ENCODE measurements at regions of chr1 and their contacts with region 1.

Region 1: DNA sequence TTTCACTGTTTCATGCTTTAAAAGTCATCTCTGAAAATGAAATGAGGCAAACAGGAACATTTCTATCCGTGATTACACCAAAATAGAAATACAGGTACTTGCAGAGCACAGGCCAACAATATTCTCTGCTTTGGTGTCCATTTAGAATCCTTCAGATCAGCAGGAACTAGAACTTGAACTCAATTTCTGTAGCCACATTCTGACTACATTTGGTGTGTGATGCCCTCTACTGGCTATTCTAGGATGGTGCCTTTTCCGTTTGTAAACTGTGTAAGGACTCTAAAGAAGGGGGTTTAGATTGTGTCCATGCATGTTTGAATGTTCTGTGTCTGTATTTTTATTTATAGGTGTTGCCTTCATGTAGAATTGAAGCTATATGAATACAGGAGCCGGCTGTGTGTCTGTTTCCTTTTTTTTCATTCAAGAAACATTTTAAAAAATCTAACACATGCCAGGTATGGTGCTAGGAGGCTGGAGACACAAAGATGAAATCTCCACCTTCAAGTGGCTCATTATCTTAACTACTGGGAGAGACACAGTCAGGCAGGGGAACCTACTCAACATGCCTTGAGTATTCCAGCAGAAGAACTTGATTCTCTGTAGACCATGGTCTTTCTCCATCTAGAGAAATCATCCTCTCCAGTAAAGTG is 7.6 kb upstream of the ZNF326 start:
- DNase-seq: peak; percentile 80
- ATAC-seq: peak; percentile 93
- H3K4me3 ChIP-seq: no peak overlapping the region
- H3K27ac ChIP-seq: no peak overlapping the region
- H3K4me1 ChIP-seq: no peaks in the 10 kb centered on the region
- H3K27me3 ChIP-seq: no peaks in the 10 kb centered on the region
- CTCF ChIP-seq: peak; percentile 91
- POLR2A ChIP-seq: no peak
- RAD21 ChIP-seq: peak; percentile 96

Region 2: DNA sequence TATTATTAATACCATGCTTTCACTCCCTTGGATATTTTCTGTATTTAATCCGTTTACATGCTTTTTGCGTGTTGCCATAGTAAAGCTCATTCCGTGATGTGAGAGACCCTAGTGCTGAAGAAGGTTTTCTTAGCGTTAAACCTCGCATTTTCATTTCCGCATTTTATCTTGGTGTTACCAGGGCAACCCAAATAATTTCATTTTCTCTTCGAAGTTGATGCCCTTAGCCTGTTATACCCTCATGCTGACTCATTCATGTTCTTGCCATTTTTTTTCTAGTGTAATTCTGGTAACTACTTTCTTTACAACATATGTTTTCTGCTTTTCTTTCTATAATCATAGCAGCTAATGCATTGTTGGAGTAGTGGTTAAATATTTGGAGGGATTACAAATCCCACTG is 317.1 kb before region 1 on chr1:
- CTCF ChIA-PET with region 1: no interaction called
- POLR2A ChIA-PET with region 1: no interaction called
- dilution Hi-C with region 1: no loop called
- in situ Hi-C with region 1: no loop called
- intact Hi-C with region 1: no loop called
- DNase-seq: no peak
- ATAC-seq: no peak
- H3K4me3 ChIP-seq: no peak overlapping the region
- H3K27ac ChIP-seq: no peak overlapping the region
- H3K4me1 ChIP-seq: peaks cover under 1% of the 10 kb centered on the region; the same call in 1 of the 2 replicates
- H3K27me3 ChIP-seq: no peaks in the 10 kb centered on the region
- CTCF ChIP-seq: no peak
- POLR2A ChIP-seq: no peak
- RAD21 ChIP-seq: no peak

Region 3: GRCh38 chr1:89780721-89781120 is 206.6 kb before region 1 on chr1:
- CTCF ChIA-PET with region 1: interaction called, 4 read pairs
- POLR2A ChIA-PET with region 1: no interaction called
- dilution Hi-C with region 1: no loop called
- in situ Hi-C with region 1: no loop called
- intact Hi-C with region 1: loop called (anchors 1 kb)
- DNase-seq: peak; percentile 69
- ATAC-seq: peak; percentile 89
- H3K4me3 ChIP-seq: no peak overlapping the region
- H3K27ac ChIP-seq: no peak overlapping the region
- H3K4me1 ChIP-seq: peaks cover 2% of the 10 kb centered on the region
- H3K27me3 ChIP-seq: peaks cover 4% of the 10 kb centered on the region; the same call in 1 of the 2 replicates
- CTCF ChIP-seq: peak; percentile 54
- POLR2A ChIP-seq: no peak
- RAD21 ChIP-seq: peak; percentile 66

Region 4: GRCh38 chr1:89804642-89805237 is 182.6 kb before region 1 on chr1:
- CTCF ChIA-PET with region 1: interaction called, 9 read pairs
- POLR2A ChIA-PET with region 1: no interaction called
- dilution Hi-C with region 1: no loop called
- in situ Hi-C with region 1: loop called (anchors 5 kb)
- intact Hi-C with region 1: loop called (anchors 1 kb)
- DNase-seq: peak; percentile 87
- ATAC-seq: peak; percentile 92
- H3K4me3 ChIP-seq: no peak overlapping the region
- H3K27ac ChIP-seq: no peak overlapping the region
- H3K4me1 ChIP-seq: peaks cover 9% of the 10 kb centered on the region
- H3K27me3 ChIP-seq: no peaks in the 10 kb centered on the region
- CTCF ChIP-seq: peak; percentile 96
- POLR2A ChIP-seq: 0 out of 2 replicates have a peak, but pooled peaks have one; percentile 36
- RAD21 ChIP-seq: peak; percentile 97

Region 5: DNA sequence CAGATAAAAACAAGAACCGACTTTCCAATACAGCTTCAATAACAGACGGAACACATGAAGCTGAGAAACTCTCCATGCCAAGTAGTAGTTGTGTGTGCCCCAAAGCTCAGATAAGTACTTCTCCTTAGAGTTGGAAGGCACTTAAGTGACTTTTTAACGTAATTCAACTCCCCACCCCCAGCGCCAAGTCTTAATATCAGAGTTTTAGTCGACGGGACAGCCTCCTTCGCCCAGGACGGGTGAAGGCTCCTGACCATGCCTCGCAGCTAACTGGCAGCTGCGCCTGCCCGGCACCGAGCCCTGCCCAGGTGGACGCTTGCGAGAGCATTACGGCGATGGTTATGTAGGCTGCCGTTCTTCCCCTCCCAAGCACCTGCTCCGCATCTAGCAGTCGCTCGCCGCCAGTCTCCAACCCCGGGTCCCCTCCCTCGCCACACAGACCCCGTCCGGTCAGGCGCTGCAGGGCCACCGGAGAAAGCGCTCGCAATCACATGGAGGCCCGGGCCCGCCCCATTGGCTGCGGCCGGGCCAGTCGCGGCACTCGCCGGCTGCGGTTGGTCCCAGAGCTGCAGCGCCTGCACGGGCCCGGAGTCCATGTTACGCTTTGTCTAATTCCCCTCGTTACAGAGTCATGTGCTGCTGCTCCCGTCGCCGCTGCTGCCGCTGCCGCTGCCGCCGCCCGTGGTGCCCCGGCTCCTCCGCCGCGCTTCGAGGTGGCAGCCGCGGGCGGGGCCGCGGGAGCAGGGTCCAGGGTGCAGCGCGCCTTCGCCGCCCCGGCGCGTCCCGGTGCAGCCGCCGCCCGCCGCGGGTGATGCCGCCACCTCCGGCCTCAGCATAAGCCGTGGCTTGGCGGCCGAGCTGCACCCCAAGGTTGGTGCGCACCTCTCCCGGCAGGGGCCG is 166.6 kb before region 1 on chr1 and contains the start of gene LRRC8D:
- CTCF ChIA-PET with region 1: no interaction called
- POLR2A ChIA-PET with region 1: no interaction called
- dilution Hi-C with region 1: no loop called
- in situ Hi-C with region 1: no loop called
- intact Hi-C with region 1: loop called (anchors 5 kb)
- DNase-seq: peak; percentile 72
- ATAC-seq: peak; percentile 97
- H3K4me3 ChIP-seq: peak within 1 kb of the TSS; percentile 81
- H3K27ac ChIP-seq: peak within 1 kb of the TSS; percentile 31; the same call in 1 of the 2 replicates
- H3K4me1 ChIP-seq: peaks cover 9% of the 10 kb centered on the region; the same call in 1 of the 2 replicates
- H3K27me3 ChIP-seq: no peaks in the 10 kb centered on the region
- CTCF ChIP-seq: no peak
- POLR2A ChIP-seq: no peak
- RAD21 ChIP-seq: no peak
- total RNA-seq, gene LRRC8D: 34.7 and 35.3 TPM in 2 replicates

Region 6: GRCh38 chr1:89843281-89844121 is 143.8 kb before region 1 on chr1:
- CTCF ChIA-PET with region 1: interaction called, 8 read pairs
- POLR2A ChIA-PET with region 1: no interaction called
- dilution Hi-C with region 1: no loop called
- in situ Hi-C with region 1: no loop called
- intact Hi-C with region 1: loop called (anchors 2 kb)
- DNase-seq: peak; percentile 66
- ATAC-seq: peak; percentile 87
- H3K4me3 ChIP-seq: peak overlapping the region; percentile 93
- H3K27ac ChIP-seq: peak overlapping the region; percentile 92
- H3K4me1 ChIP-seq: peaks cover 6% of the 10 kb centered on the region
- H3K27me3 ChIP-seq: no peaks in the 10 kb centered on the region
- CTCF ChIP-seq: peak; percentile 64
- POLR2A ChIP-seq: 0 out of 2 replicates have a peak, but pooled peaks have one; percentile 34
- RAD21 ChIP-seq: peak; percentile 69

Region 7: DNA sequence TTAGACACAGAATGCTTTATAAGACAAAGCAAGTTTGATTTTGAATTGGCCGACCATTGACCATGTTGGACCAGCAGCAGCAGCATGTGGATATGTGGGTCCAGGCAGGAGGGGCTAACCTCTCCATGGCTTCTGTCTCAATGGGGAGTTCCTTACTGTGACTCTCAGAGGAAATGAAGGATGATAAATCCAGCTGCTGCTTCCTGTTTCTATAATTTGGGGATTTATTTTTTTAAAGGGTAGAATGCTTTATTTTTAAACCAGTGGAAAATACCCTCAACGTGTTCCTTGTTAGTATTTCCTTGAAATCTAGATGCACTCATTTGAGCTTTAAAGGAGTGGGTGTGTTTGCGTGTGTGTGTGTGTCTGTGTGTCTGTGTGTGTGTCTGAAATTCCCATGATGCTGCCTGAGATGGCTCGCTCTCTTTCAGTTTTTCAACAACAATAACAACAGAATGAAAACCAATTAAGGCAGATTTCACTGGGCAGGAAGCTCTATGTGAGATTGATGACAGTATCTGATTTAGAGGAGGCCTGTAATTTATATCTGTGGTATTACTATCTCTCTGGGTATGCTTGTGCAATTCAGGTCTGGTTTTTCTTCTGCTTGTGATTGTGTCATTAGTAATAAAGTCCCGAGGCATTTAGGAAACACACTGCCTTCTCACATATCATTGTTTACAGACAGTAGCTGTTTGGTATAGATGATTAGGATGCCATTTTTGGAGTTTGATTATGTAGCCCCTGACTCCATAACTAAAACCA is 78.4 kb before region 1 on chr1:
- CTCF ChIA-PET with region 1: interaction called, 4 read pairs
- POLR2A ChIA-PET with region 1: no interaction called
- dilution Hi-C with region 1: no loop called
- in situ Hi-C with region 1: no loop called
- intact Hi-C with region 1: loop called (anchors 5 kb)
- DNase-seq: peak; percentile 79
- ATAC-seq: 0 out of 2 replicates have a peak, but pooled peaks have one; percentile 1
- H3K4me3 ChIP-seq: no peak overlapping the region
- H3K27ac ChIP-seq: peak overlapping the region; percentile 63
- H3K4me1 ChIP-seq: peaks cover 43% of the 10 kb centered on the region
- H3K27me3 ChIP-seq: no peaks in the 10 kb centered on the region
- CTCF ChIP-seq: no peak
- POLR2A ChIP-seq: no peak
- RAD21 ChIP-seq: no peak

Measured in IMR-90 (cell line).